SK-N-SH (cell line): ENCODE measurements at regions of chr7 and their contacts with region 1.

Region 1: GRCh38 chr7:154913638-154914312 is 89.1 kb downstream of the PAXIP1 start:
- DNase-seq: peak; percentile 96
- H3K4me3 ChIP-seq: peak overlapping the region in 1 of 2 experiments; percentile 6; a peak in 1 of 4 replicates
- H3K27ac ChIP-seq: no peak overlapping the region
- H3K4me1 ChIP-seq: no peaks in the 10 kb centered on the region
- H3K27me3 ChIP-seq: no peaks in the 10 kb centered on the region
- CTCF ChIP-seq: peak; percentile 80
- EP300 ChIP-seq: no peak
- RAD21 ChIP-seq: peak; percentile 88

Region 2: DNA sequence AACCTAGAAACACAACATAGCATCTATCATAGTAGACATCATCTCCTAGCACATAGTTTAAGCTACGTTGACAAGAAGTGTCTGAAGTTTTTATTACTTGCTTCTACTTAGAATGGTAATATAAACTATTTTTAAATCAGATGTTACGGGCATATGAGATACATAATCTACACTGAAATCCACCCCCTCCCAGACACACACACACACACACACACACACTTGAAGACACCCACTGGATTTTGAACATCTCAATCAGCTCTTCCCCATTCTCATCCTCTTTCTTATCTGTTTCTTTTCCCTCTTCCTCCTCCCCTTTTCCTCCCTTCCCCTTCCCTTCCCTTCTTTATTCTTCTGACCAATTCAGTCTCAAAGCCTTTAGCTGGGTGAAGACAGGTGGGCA is 86.8 kb before region 1 on chr7:
- CTCF ChIA-PET with region 1: interaction called, 69 read pairs
- POLR2A ChIA-PET with region 1: no interaction called
- DNase-seq: no peak
- H3K4me3 ChIP-seq: no peak overlapping the region
- H3K27ac ChIP-seq: no peak overlapping the region
- H3K4me1 ChIP-seq: no peaks in the 10 kb centered on the region; a peak in 1 of 4 replicates
- H3K27me3 ChIP-seq: no peaks in the 10 kb centered on the region
- CTCF ChIP-seq: no peak
- EP300 ChIP-seq: no peak
- RAD21 ChIP-seq: no peak

Region 3: DNA sequence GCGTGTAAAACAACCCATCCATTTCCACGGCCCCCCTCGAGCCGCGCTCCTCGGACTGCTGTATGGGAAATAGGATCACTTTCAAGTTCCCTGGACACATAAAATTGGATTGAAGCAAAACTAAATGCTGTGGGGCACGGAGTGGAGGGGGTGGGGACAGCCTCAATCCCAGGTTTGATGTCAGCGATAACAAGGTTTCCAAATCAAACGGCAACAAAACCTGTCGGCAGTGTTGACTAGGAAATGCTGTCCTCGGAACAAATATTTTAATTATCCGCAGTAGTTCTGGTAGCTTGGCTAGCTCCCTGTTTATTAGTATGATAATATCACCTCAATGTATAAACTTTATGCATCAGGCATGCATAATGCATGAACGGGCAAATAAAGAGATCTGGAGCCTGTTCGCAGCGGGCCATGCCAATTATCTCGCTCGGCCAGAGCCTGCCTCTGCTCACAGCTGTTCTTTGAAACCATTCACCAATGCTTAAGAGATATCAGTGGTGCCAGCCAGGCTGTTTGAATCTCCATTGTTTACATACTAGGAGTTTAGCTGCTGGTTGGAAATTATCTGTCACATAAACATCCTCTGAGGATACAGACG is 71.9 kb before region 1 on chr7:
- CTCF ChIA-PET with region 1: interaction called, 29 read pairs
- POLR2A ChIA-PET with region 1: no interaction called
- DNase-seq: peak; percentile 83
- H3K4me3 ChIP-seq: peak overlapping the region in 1 of 2 experiments; percentile 12; a peak in 1 of 4 replicates
- H3K27ac ChIP-seq: peak overlapping the region in 1 of 2 experiments; percentile 98; a peak in 2 of 4 replicates
- H3K4me1 ChIP-seq: peaks cover 0 to 30% of the 10 kb centered on the region in 2 experiments; a peak in 2 of 4 replicates
- H3K27me3 ChIP-seq: no peaks in the 10 kb centered on the region
- CTCF ChIP-seq: no peak
- EP300 ChIP-seq: peak in 1 of 2 experiments; percentile 87; a peak in 2 of 4 replicates
- RAD21 ChIP-seq: peak; percentile 11; the same call in 1 of the 2 replicates

Region 4: GRCh38 chr7:154857767-154858681 is 55.8 kb before region 1 on chr7:
- CTCF ChIA-PET with region 1: interaction called, 19 read pairs
- POLR2A ChIA-PET with region 1: no interaction called
- DNase-seq: no peak
- H3K4me3 ChIP-seq: no peak overlapping the region
- H3K27ac ChIP-seq: no peak overlapping the region
- H3K4me1 ChIP-seq: no peaks in the 10 kb centered on the region; a peak in 1 of 4 replicates
- H3K27me3 ChIP-seq: no peaks in the 10 kb centered on the region
- CTCF ChIP-seq: no peak
- EP300 ChIP-seq: no peak
- RAD21 ChIP-seq: no peak

Region 5: GRCh38 chr7:154903083-154903731 is 10.6 kb before region 1 on chr7:
- CTCF ChIA-PET with region 1: interaction called, 126 read pairs
- POLR2A ChIA-PET with region 1: no interaction called
- DNase-seq: peak; percentile 16
- H3K4me3 ChIP-seq: no peak overlapping the region
- H3K27ac ChIP-seq: no peak overlapping the region
- H3K4me1 ChIP-seq: no peaks in the 10 kb centered on the region
- H3K27me3 ChIP-seq: no peaks in the 10 kb centered on the region
- CTCF ChIP-seq: no peak
- EP300 ChIP-seq: no peak
- RAD21 ChIP-seq: no peak

Region 6: DNA sequence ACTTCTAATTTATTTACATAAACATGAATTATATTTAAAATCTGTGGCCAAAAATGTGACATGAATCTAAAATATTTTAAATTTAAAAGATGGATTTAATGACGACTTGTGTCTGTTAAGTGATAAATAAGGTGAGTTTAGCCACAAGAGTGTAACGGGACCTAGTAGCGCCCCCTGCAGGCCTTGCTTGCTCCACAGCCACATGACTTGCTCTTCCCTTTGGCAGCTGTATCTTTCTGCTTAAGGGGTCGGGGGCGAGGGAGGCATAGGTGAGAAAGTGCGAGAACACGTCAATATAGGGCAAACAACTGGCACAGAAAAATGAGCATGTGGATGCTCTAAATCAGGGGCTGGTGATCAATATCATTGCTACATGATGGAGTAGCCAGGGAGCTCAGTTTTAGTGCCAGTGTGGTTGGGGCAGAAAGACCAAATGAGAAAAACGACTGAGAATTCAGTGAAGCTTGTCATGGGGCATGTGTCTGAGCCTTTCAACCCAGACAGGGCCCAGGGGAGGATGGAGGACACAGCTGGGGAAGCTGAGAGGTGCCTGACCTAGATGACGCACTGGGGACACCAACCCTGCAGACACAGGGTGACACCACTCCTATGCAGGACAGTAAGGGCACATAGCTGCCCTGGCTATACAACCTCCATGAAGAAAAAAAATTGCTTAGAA is 39.4 kb after region 1 on chr7:
- CTCF ChIA-PET with region 1: interaction called, 16 read pairs
- POLR2A ChIA-PET with region 1: no interaction called
- DNase-seq: peak; percentile 63
- H3K4me3 ChIP-seq: no peak overlapping the region; a peak in 1 of 4 replicates
- H3K27ac ChIP-seq: no peak overlapping the region
- H3K4me1 ChIP-seq: no peaks in the 10 kb centered on the region
- H3K27me3 ChIP-seq: no peaks in the 10 kb centered on the region
- CTCF ChIP-seq: peak; percentile 86
- EP300 ChIP-seq: no peak
- RAD21 ChIP-seq: peak; percentile 48

Region 7: GRCh38 chr7:155380221-155380861 is 466.6 kb after region 1 on chr7:
- CTCF ChIA-PET with region 1: interaction called, 11 read pairs
- POLR2A ChIA-PET with region 1: no interaction called
- DNase-seq: peak; percentile 95
- H3K4me3 ChIP-seq: no peak overlapping the region
- H3K27ac ChIP-seq: no peak overlapping the region
- H3K4me1 ChIP-seq: peaks cover 3 to 4% of the 10 kb centered on the region in 2 experiments; a peak in 1 of 4 replicates
- H3K27me3 ChIP-seq: peaks cover 100% of the 10 kb centered on the region
- CTCF ChIP-seq: peak; percentile 84
- EP300 ChIP-seq: no peak
- RAD21 ChIP-seq: peak; percentile 70